ENCODE measurements at regions of chr9 and their contacts with region 1.

Region 1: GRCh38 chr9:104386425-104387069 is 117.5 kb upstream of the OR13F1 start:
- DNase-seq: peak; percentile 48
- H3K4me3 Mint-ChIP-seq: no peak overlapping the region
- H3K27ac Mint-ChIP-seq: no peak overlapping the region
- H3K4me1 Mint-ChIP-seq: no peaks in the 10 kb centered on the region
- H3K27me3 Mint-ChIP-seq: no peaks in the 10 kb centered on the region
- CTCF ChIP-seq: peak; percentile 61

Region 2: GRCh38 chr9:103152473-103152872 is 1234.1 kb before region 1 on chr9:
- CTCF ChIA-PET with region 1: no interaction called
- POLR2A ChIA-PET with region 1: no interaction called
- intact Hi-C with region 1: loop called (anchors 2 kb)
- DNase-seq: peak; percentile 10
- H3K4me3 Mint-ChIP-seq: no peak overlapping the region
- H3K27ac Mint-ChIP-seq: no peak overlapping the region
- H3K4me1 Mint-ChIP-seq: no peaks in the 10 kb centered on the region
- H3K27me3 Mint-ChIP-seq: no peaks in the 10 kb centered on the region
- CTCF ChIP-seq: peak; percentile 16

Region 3: GRCh38 chr9:103789686-103790085 is 596.9 kb before region 1 on chr9:
- CTCF ChIA-PET with region 1: no interaction called
- POLR2A ChIA-PET with region 1: no interaction called
- intact Hi-C with region 1: loop called (anchors 1 kb)
- DNase-seq: peak; percentile 49
- H3K4me3 Mint-ChIP-seq: no peak overlapping the region
- H3K27ac Mint-ChIP-seq: no peak overlapping the region
- H3K4me1 Mint-ChIP-seq: no peaks in the 10 kb centered on the region
- H3K27me3 Mint-ChIP-seq: no peaks in the 10 kb centered on the region
- CTCF ChIP-seq: peak; percentile 42

Region 4: GRCh38 chr9:103902263-103902662 is 484.3 kb before region 1 on chr9:
- CTCF ChIA-PET with region 1: no interaction called
- POLR2A ChIA-PET with region 1: no interaction called
- intact Hi-C with region 1: no loop called
- DNase-seq: no peak
- H3K4me3 Mint-ChIP-seq: no peak overlapping the region
- H3K27ac Mint-ChIP-seq: no peak overlapping the region
- H3K4me1 Mint-ChIP-seq: peaks cover 4% of the 10 kb centered on the region
- H3K27me3 Mint-ChIP-seq: no peaks in the 10 kb centered on the region
- CTCF ChIP-seq: no peak

Region 5: DNA sequence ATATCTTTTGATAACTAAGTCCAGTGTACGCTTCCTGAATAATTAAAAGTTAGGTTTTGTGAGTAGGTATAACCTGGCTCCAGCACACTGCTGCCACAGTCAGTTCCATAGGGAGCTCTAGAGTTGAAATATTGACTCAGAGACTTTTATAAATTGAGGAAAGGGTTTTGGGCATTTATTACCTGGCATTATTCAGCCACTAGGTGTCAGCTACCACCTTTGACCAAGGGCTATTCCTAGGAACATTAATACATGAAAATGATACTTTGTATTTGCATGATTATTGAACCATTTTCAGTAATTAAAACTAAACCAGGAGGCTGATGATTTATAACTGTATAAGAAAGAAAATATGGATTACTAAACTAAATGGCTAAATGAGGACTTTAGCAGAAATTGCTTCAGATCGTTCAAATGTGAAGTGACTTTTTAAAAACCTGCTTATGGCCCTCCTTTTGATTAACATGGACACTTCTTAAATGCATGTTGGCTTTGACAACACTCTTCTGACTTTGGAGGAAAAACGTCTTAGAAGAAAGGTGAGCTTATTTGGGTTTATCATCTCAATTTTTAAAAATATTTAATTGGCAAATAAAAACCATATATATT is 209.4 kb before region 1 on chr9:
- CTCF ChIA-PET with region 1: interaction called, 225 read pairs
- POLR2A ChIA-PET with region 1: interaction called, 3 read pairs
- intact Hi-C with region 1: loop called (anchors 1 kb)
- DNase-seq: peak; percentile 53
- H3K4me3 Mint-ChIP-seq: no peak overlapping the region
- H3K27ac Mint-ChIP-seq: no peak overlapping the region
- H3K4me1 Mint-ChIP-seq: no peaks in the 10 kb centered on the region
- H3K27me3 Mint-ChIP-seq: no peaks in the 10 kb centered on the region
- CTCF ChIP-seq: peak; percentile 58

Region 6: GRCh38 chr9:104319685-104320084 is 66.9 kb before region 1 on chr9:
- CTCF ChIA-PET with region 1: no interaction called
- POLR2A ChIA-PET with region 1: no interaction called
- intact Hi-C with region 1: no loop called
- DNase-seq: no peak
- H3K4me3 Mint-ChIP-seq: no peak overlapping the region
- H3K27ac Mint-ChIP-seq: no peak overlapping the region
- H3K4me1 Mint-ChIP-seq: no peaks in the 10 kb centered on the region
- H3K27me3 Mint-ChIP-seq: no peaks in the 10 kb centered on the region
- CTCF ChIP-seq: no peak

Region 7: DNA sequence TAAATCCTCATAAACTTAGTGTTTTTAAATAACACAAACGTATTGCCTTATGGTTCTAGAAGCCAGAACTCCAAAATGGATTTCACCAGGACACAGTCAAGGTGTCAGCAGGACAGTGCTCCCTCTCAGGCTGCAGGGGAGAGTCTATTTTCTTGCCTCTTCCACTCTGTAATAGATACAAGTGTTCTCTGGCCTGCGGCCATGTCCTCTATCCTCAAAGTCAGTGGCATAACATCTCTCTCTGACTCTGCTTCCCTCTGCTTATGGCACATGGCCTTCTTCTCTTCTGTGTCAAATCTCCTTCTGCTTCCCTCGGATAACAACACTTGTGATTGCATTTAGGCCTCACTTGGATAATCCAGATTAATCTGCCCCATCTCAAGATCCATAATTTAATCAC is 11.8 kb before region 1 on chr9:
- CTCF ChIA-PET with region 1: interaction called, 16 read pairs
- POLR2A ChIA-PET with region 1: no interaction called
- intact Hi-C with region 1: no loop called
- DNase-seq: no peak
- H3K4me3 Mint-ChIP-seq: no peak overlapping the region
- H3K27ac Mint-ChIP-seq: no peak overlapping the region
- H3K4me1 Mint-ChIP-seq: no peaks in the 10 kb centered on the region
- H3K27me3 Mint-ChIP-seq: no peaks in the 10 kb centered on the region
- CTCF ChIP-seq: no peak

Region 8: GRCh38 chr9:104682642-104683041 is 296.1 kb after region 1 on chr9:
- CTCF ChIA-PET with region 1: interaction called, 7 read pairs
- POLR2A ChIA-PET with region 1: no interaction called
- intact Hi-C with region 1: loop called (anchors 5 kb)
- DNase-seq: peak; percentile 78
- H3K4me3 Mint-ChIP-seq: no peak overlapping the region
- H3K27ac Mint-ChIP-seq: no peak overlapping the region
- H3K4me1 Mint-ChIP-seq: no peaks in the 10 kb centered on the region
- H3K27me3 Mint-ChIP-seq: no peaks in the 10 kb centered on the region
- CTCF ChIP-seq: peak; percentile 53

Region 9: GRCh38 chr9:104794070-104794469 is 407.5 kb after region 1 on chr9:
- CTCF ChIA-PET with region 1: no interaction called
- POLR2A ChIA-PET with region 1: no interaction called
- intact Hi-C with region 1: no loop called
- DNase-seq: no peak
- H3K4me3 Mint-ChIP-seq: no peak overlapping the region
- H3K27ac Mint-ChIP-seq: no peak overlapping the region
- H3K4me1 Mint-ChIP-seq: peaks cover 26% of the 10 kb centered on the region
- H3K27me3 Mint-ChIP-seq: no peaks in the 10 kb centered on the region
- CTCF ChIP-seq: no peak

Measured in MCF 10A (cell line).